H1 (cell line): ENCODE measurements at regions of chr11 and their contacts with region 1.

Region 1: GRCh38 chr11:127074151-127074761 is 73.7 kb upstream of the KIRREL3 start:
- DNase-seq: peak in 1 of 2 experiments; percentile 21
- H3K4me3 ChIP-seq: no peak overlapping the region
- H3K27ac ChIP-seq: no peak overlapping the region
- H3K4me1 ChIP-seq: no peaks in the 10 kb centered on the region
- H3K27me3 ChIP-seq: no peaks in the 10 kb centered on the region
- CTCF ChIP-seq: peak in 2 of 3 experiments; percentile 69 to 79; a peak in 3 of 4 replicates
- EP300 ChIP-seq: no peak
- POLR2A ChIP-seq: no peak
- RAD21 ChIP-seq: peak; percentile 80 to 87

Region 2: DNA sequence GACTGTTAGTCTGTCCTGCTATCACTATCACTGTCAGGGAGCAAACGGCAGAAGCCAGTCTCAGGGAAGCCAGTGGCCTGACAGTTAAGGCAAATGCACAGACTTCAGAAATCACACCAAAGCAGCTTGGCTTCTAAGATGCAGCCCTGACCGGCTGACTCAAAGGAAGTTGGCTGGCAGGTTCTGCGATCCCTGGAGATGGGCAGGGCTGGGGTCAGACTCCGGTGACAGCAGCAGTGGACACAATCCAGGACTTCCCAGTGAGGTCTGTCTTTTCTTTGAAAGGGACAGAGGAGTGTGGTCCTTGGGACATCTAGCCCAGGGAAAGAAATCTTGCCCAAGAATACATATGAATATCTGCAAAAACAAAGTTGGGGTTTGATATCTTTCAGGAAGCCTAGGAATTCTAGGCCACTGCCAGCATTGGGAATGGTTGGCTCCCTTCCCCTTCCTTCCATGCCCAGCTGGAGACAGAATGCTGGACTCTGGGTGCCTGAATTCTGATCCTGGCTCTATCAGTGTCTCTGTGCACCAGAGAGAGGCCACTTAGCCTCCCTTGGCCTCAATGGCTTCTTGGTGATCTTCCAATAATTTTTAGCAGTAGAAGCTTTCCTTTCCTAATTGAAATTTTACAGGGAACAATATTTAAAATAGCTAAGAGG is 182.6 kb before region 1 on chr11:
- CTCF ChIA-PET with region 1: interaction called, 12 read pairs
- POLR2A ChIA-PET with region 1: no interaction called
- DNase-seq: no peak
- H3K4me3 ChIP-seq: no peak overlapping the region
- H3K27ac ChIP-seq: no peak overlapping the region
- H3K4me1 ChIP-seq: peaks cover 4 to 12% (median 9%) of the 10 kb centered on the region in 4 experiments; a peak in 6 of 7 replicates
- H3K27me3 ChIP-seq: no peaks in the 10 kb centered on the region
- CTCF ChIP-seq: no peak
- EP300 ChIP-seq: no peak
- POLR2A ChIP-seq: no peak
- RAD21 ChIP-seq: no peak

Region 3: GRCh38 chr11:126969865-126970479 is 104.3 kb before region 1 on chr11:
- CTCF ChIA-PET with region 1: interaction called, 20 read pairs
- POLR2A ChIA-PET with region 1: no interaction called
- DNase-seq: no peak
- H3K4me3 ChIP-seq: no peak overlapping the region
- H3K27ac ChIP-seq: no peak overlapping the region
- H3K4me1 ChIP-seq: peaks cover 3 to 7% (median 4%) of the 10 kb centered on the region in 4 experiments; a peak in 5 of 7 replicates
- H3K27me3 ChIP-seq: no peaks in the 10 kb centered on the region
- CTCF ChIP-seq: peak; percentile 55 to 66 (median 58)
- EP300 ChIP-seq: no peak
- POLR2A ChIP-seq: no peak
- RAD21 ChIP-seq: peak; percentile 58 to 61

Region 4: DNA sequence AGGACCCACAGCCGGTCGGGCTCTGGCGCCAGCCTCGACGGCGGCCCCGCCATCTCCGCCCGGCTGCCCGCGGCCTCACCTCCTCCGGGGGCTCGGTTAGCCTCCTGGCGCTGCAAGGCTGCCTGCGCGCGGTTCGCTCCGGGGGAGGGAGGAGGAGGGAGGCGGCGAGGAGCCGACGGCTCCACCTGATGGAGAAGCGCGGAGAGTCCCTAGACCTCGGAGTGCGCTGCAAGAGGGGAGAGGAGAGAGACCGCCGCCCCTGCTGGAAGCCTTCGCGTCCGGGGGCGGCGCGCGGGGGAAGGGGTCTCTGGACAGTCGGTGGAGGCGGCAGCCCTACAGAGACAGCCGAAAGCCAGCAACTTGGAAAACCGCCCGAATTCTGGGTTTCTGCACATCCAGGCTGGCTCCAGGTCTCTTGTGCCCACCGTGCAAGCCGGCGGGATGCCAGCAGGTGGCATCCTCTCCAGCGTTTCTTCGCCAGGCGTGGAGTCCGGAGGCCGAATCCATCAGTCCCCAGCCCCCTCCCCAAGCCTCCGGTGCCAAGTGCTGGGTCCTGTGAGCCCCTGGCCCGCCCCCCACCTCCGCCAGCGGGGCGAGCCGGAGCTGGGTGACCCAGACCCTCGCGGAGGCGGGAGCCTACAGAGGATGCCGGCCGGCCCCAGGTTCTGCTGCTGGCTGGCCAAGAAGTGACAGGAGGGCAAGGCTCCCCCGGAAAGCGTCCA is 70.8 kb before region 1 on chr11:
- CTCF ChIA-PET with region 1: interaction called, 10 read pairs
- POLR2A ChIA-PET with region 1: no interaction called
- DNase-seq: peak in 1 of 2 experiments; percentile 84
- H3K4me3 ChIP-seq: peak overlapping the region; percentile 46 to 74 (median 62)
- H3K27ac ChIP-seq: no peak overlapping the region
- H3K4me1 ChIP-seq: peaks cover 3 to 11% (median 8%) of the 10 kb centered on the region in 4 experiments; a peak in 6 of 7 replicates
- H3K27me3 ChIP-seq: peaks cover 32 to 60% (median 49%) of the 10 kb centered on the region in 4 experiments
- CTCF ChIP-seq: peak; percentile 51 to 67 (median 51)
- EP300 ChIP-seq: no peak
- POLR2A ChIP-seq: no peak
- RAD21 ChIP-seq: peak in 1 of 2 experiments; percentile 57; a peak in 2 of 4 replicates

Region 5: DNA sequence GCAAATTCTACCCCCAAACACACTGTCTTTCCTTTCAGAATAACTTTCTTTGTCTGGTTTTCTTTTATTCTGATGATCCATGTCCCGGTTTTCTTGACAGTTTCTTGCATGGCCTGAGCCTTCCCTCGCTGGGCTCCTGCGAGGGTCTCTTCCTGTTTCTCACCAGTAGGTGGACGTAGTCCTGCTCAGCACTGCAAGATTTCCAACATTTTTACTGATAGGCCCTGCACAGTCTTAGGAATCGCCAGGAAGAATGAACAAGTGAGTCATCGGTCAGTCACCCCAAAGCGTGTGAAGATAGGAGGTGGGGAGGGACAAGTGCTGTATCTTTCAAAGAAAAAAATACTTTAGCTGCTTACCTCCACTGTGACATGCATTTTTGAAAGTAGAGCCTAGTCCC is 56.8 kb before region 1 on chr11:
- CTCF ChIA-PET with region 1: interaction called, 16 read pairs
- POLR2A ChIA-PET with region 1: no interaction called
- DNase-seq: no peak
- H3K4me3 ChIP-seq: no peak overlapping the region
- H3K27ac ChIP-seq: no peak overlapping the region
- H3K4me1 ChIP-seq: no peaks in the 10 kb centered on the region
- H3K27me3 ChIP-seq: no peaks in the 10 kb centered on the region
- CTCF ChIP-seq: peak; percentile 57 to 70 (median 61)
- EP300 ChIP-seq: no peak
- POLR2A ChIP-seq: no peak
- RAD21 ChIP-seq: peak; percentile 53 to 63

Region 6: GRCh38 chr11:127044535-127044934 is 29.7 kb before region 1 on chr11:
- CTCF ChIA-PET with region 1: no interaction called
- POLR2A ChIA-PET with region 1: no interaction called
- DNase-seq: no peak
- H3K4me3 ChIP-seq: no peak overlapping the region
- H3K27ac ChIP-seq: no peak overlapping the region
- H3K4me1 ChIP-seq: no peaks in the 10 kb centered on the region
- H3K27me3 ChIP-seq: no peaks in the 10 kb centered on the region
- CTCF ChIP-seq: no peak
- EP300 ChIP-seq: no peak
- POLR2A ChIP-seq: no peak
- RAD21 ChIP-seq: no peak

Region 7: DNA sequence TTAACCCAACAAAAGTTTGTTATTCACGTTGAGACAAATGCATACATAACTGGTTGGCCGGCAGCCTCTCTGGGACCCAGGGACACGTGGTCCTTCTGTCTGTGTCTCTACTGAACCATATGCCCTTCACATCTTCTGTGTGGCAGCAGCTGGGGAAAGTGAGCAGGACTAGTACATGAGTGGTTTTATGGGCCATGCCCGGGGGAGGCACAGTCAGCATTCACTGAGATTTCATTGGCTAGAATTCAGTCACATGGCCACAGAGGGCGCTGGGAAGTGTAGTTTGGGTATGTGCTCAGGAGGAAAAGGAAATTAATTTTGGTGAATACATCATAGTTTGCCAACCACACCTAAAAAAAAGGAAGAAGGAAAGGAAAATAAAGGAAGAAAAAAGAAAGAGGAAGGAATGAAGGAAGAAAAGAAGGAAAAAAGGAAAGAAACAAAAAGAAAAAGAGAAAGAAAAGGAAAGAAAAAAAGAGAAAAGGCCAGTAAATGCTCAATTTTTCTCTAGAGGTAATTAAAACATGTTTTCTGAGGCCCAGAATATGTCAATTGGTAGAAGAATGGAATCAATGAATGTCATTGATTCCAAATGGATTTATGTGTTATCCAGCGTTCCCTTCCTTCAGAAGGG is 17.8 kb before region 1 on chr11:
- CTCF ChIA-PET with region 1: interaction called, 14 read pairs
- POLR2A ChIA-PET with region 1: no interaction called
- DNase-seq: no peak
- H3K4me3 ChIP-seq: no peak overlapping the region
- H3K27ac ChIP-seq: no peak overlapping the region
- H3K4me1 ChIP-seq: peaks cover 3 to 11% (median 8%) of the 10 kb centered on the region in 4 experiments; a peak in 6 of 7 replicates
- H3K27me3 ChIP-seq: no peaks in the 10 kb centered on the region; a peak in 1 of 7 replicates
- CTCF ChIP-seq: no peak
- EP300 ChIP-seq: no peak
- POLR2A ChIP-seq: no peak
- RAD21 ChIP-seq: no peak

Region 8: GRCh38 chr11:127362754-127363153 is 288.5 kb after region 1 on chr11:
- CTCF ChIA-PET with region 1: no interaction called
- POLR2A ChIA-PET with region 1: no interaction called
- DNase-seq: no peak
- H3K4me3 ChIP-seq: no peak overlapping the region
- H3K27ac ChIP-seq: no peak overlapping the region
- H3K4me1 ChIP-seq: peaks cover 0 to 5% (median 0%) of the 10 kb centered on the region in 4 experiments; a peak in 2 of 7 replicates
- H3K27me3 ChIP-seq: no peaks in the 10 kb centered on the region
- CTCF ChIP-seq: no peak
- EP300 ChIP-seq: no peak
- POLR2A ChIP-seq: no peak
- RAD21 ChIP-seq: no peak